Ovary (tissue), 10 donors: ENCODE measurements at regions of chr19 and their contacts with region 1.

Region 1: GRCh38 chr19:11209839-11210655 is 12.7 kb upstream of the KANK2 start:
- DNase-seq: no peak
- H3K4me3 ChIP-seq: no peak overlapping the region
- H3K27ac ChIP-seq: no peak overlapping the region
- H3K4me1 ChIP-seq: no peaks in the 10 kb centered on the region
- H3K27me3 ChIP-seq: no peaks in the 10 kb centered on the region
- CTCF ChIP-seq: no peak
- EP300 ChIP-seq: no peak
- POLR2A ChIP-seq: no peak

Region 2: GRCh38 chr19:10502524-10503001 is 707.5 kb before region 1 on chr19:
- intact Hi-C with region 1: no loop called
- DNase-seq: peak; percentile 91 to 94 (median 93)
- H3K4me3 ChIP-seq: peak overlapping the region; percentile 98
- H3K27ac ChIP-seq: peak overlapping the region; percentile 83 to 90
- H3K4me1 ChIP-seq: peaks cover 3% of the 10 kb centered on the region
- H3K27me3 ChIP-seq: no peaks in the 10 kb centered on the region
- CTCF ChIP-seq: peak in 1 of 3 donors; percentile 24
- EP300 ChIP-seq: no peak
- POLR2A ChIP-seq: peak; percentile 61

Region 3: DNA sequence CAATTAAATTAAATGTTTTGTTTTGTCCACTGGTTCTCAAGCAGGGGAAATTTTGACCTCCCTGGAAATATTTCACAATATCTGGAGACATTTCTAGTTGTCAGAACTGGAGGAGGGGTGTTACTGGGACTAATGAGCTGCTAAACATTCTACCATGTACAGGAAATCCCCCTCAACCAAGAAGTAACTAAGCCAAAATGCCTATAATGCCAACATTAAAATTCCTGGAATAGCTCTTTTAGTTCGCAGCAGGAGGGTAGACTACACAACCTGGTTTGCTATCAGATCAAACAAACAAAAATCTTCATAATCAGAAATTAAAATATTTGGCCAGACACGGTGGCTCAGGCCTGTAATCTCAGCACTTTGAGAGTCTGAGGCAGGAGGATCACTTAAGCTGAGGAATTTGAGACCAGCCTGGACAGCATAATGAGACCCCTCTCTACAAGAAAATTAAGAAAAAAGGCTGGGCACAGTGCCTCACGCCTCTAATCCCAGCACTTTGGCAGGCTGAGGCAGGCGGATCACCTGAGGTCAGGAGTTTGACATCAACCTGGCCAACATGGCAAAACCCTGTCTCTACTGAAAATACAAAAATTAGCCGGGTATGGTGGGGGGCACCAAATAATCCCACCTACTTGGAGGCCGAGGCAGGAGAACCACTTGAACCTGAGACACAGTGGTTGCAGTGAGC is 262.9 kb before region 1 on chr19:
- intact Hi-C with region 1: loop called in 1 of 4 experiments (anchors 10 kb)
- DNase-seq: no peak
- H3K4me3 ChIP-seq: no peak overlapping the region
- H3K27ac ChIP-seq: no peak overlapping the region
- H3K4me1 ChIP-seq: no peaks in the 10 kb centered on the region
- H3K27me3 ChIP-seq: no peaks in the 10 kb centered on the region
- CTCF ChIP-seq: no peak
- EP300 ChIP-seq: no peak
- POLR2A ChIP-seq: no peak

Region 4: DNA sequence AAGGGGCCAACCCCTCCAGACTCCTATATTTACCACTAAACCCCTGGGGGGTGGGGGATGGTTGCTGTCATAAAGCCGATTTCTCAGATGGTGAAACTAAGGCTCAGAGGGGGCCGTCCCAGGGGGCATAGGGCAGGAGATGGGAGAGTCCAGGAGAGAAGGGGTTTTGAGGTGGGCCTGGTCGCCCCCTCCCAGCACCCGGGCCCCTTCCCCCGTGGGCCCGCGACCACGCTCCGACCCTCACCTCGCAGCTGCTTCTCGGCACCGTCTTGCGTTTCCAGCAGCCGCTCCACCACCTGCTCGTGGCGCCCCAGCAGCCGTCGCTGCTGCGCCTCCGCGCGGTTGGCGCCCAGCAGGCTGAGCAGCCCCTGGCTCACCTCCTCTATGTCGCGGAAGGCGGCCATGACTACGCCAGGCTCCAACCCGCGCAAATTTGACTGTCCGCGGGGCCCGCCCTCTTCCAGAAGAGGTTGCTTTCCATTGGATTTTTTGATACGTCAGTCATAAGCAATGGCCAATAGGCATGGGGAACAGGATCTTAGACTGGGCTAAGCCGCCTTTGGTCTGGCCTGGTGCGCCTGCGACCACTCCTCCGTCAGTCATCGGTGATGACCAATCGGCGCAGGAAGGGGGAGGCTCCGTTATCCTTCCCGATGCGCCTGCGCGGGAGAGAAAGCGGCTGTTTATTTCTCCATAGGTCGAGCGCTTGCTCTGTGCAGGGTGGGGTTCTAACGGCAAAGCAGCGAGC is 54.5 kb before region 1 on chr19 and contains the start of gene SPC24:
- intact Hi-C with region 1: no loop called
- DNase-seq: peak; percentile 92 to 95 (median 94)
- H3K4me3 ChIP-seq: peak within 1 kb of the TSS; percentile 44
- H3K27ac ChIP-seq: peak within 1 kb of the TSS; percentile 30 to 56
- H3K4me1 ChIP-seq: peaks cover 15% of the 10 kb centered on the region
- H3K27me3 ChIP-seq: no peaks in the 10 kb centered on the region
- CTCF ChIP-seq: no peak
- EP300 ChIP-seq: no peak
- POLR2A ChIP-seq: no peak
- total RNA-seq, gene SPC24: 0.93 to 2.7 (median 1.0) TPM in 6 of 7 donors, not detected in the other